WTC11 (cell line): ENCODE measurements at regions of chr16 and their contacts with region 1.

Region 1: DNA sequence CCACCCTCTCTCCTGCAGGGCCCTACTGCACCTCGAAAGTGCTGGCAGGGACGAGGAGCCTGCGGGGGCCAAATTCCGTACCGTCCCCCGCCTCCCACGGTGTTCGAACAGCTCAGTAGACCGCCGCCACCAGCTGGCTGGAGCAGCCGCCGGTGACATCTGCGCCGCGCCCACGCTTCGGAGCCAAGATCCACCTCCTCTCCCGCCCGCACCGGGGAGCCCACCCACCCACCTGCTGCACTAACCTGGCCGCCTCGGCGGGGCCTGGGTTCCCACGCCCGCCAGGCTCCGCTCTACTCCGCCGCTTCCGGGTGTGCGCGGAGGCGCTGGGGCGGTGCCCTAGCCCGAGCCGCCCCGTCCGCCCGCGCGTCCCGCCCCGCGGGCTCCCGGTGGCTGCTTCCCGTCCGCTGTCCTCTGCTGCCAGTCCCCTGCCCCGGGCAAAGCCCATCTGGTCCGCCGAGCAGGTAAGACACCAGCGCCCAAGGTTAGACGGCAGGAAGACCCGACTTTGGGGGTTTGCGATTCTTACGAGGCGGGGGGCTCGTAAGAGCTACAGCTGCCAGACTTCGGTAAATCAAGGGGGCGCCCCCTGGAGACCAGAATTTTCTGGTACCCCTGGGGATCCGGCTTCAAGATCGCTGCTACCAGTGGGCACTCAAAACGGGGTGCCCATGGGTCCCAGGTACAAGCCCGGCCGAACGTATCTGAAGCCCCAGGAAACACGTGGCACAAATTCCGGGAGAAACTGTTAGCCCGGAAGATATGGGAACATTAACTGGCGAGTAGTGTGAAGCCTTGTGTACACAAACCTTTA is at the starts of genes FBXL8 and TRADD:
- DNase-seq: peak; percentile 67
- ATAC-seq: 0 out of 2 replicates have a peak, but pooled peaks have one; percentile 2
- H3K4me3 Mint-ChIP-seq: peak within 1 kb of the TSS; percentile 74
- H3K27ac Mint-ChIP-seq: no peak within 1 kb of the TSS
- H3K4me1 Mint-ChIP-seq: peaks cover 28% of the 10 kb centered on the region
- H3K27me3 Mint-ChIP-seq: peaks cover 99% of the 10 kb centered on the region
- CTCF ChIP-seq: 0 out of 2 replicates have a peak, but pooled peaks have one; percentile 28
- total RNA-seq, gene FBXL8: 1.1 to 1.2 TPM (median 1.1 TPM) in 3 replicates
- total RNA-seq, gene TRADD: 1.4 to 2.1 TPM (median 1.7 TPM) in 3 replicates

Region 2: GRCh38 chr16:66911112-66911511 is 248.7 kb before region 1 on chr16:
- CTCF ChIA-PET with region 1: interaction called, 10 read pairs
- POLR2A ChIA-PET with region 1: no interaction called
- DNase-seq: no peak
- ATAC-seq: no peak
- H3K4me3 Mint-ChIP-seq: no peak overlapping the region
- H3K27ac Mint-ChIP-seq: no peak overlapping the region
- H3K4me1 Mint-ChIP-seq: no peaks in the 10 kb centered on the region
- H3K27me3 Mint-ChIP-seq: peaks cover 13% of the 10 kb centered on the region
- CTCF ChIP-seq: no peak

Region 3: GRCh38 chr16:66961065-66961744 is 198.6 kb before region 1 on chr16 and contains the start of gene CES3:
- CTCF ChIA-PET with region 1: interaction called, 51 read pairs
- POLR2A ChIA-PET with region 1: no interaction called
- DNase-seq: peak; percentile 91
- ATAC-seq: peak; percentile 100
- H3K4me3 Mint-ChIP-seq: peak within 1 kb of the TSS; percentile 66
- H3K27ac Mint-ChIP-seq: peak within 1 kb of the TSS; percentile 56
- H3K4me1 Mint-ChIP-seq: peaks cover 9% of the 10 kb centered on the region
- H3K27me3 Mint-ChIP-seq: peaks cover 8% of the 10 kb centered on the region; the same call in 1 of the 2 replicates
- CTCF ChIP-seq: peak; percentile 72
- total RNA-seq, gene CES3: 3.3 to 6.0 TPM (median 5.7 TPM) in 3 replicates

Region 4: GRCh38 chr16:66991545-66992077 is 168.2 kb before region 1 on chr16:
- CTCF ChIA-PET with region 1: interaction called, 14 read pairs
- POLR2A ChIA-PET with region 1: no interaction called
- DNase-seq: no peak
- ATAC-seq: no peak
- H3K4me3 Mint-ChIP-seq: no peak overlapping the region
- H3K27ac Mint-ChIP-seq: no peak overlapping the region
- H3K4me1 Mint-ChIP-seq: no peaks in the 10 kb centered on the region
- H3K27me3 Mint-ChIP-seq: peaks cover 17% of the 10 kb centered on the region
- CTCF ChIP-seq: no peak

Region 5: DNA sequence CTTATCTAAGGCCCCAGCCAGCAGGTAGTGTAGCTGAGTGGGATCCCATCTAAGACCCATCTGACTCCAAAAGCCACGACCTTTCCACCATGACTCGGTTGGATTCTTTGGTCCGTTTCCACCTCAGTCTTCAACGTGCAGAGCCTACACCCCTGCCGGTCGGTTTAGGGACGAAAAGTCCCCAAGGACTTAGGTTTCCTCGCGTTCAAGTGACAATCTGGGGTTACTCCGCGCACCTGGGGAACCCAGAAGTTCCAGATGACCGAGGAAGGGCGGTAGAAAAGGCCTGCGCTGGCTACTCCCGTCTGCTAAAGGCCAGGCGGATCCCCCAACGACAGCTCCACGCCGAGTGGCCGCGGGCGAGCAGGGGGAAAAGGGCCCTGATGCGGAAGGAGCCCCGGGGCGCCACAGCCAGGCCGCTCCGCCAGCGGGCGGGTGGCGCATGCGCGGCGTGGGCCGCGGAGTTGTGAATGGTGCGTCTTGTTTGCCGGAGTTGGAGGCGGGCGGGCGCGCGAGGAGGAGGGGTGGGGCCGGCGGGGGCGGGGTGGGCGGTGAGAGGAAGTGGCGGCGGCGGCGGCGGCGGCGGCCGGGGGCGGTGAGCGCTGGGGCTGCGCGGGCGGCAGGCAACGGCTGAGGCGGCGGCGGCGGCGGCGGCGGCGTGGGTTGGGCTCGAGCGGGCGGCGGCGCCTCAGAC is 131.1 kb before region 1 on chr16 and contains the start of gene CBFB:
- CTCF ChIA-PET with region 1: interaction called, 26 read pairs
- POLR2A ChIA-PET with region 1: no interaction called
- DNase-seq: peak; percentile 78
- ATAC-seq: peak; percentile 83
- H3K4me3 Mint-ChIP-seq: peak within 1 kb of the TSS; percentile 84
- H3K27ac Mint-ChIP-seq: no peak within 1 kb of the TSS
- H3K4me1 Mint-ChIP-seq: peaks cover 16% of the 10 kb centered on the region; the same call in 1 of the 2 replicates
- H3K27me3 Mint-ChIP-seq: peaks cover 10% of the 10 kb centered on the region
- CTCF ChIP-seq: no peak
- total RNA-seq, gene CBFB: 36.9 to 40.9 TPM (median 37.1 TPM) in 3 replicates

Region 6: DNA sequence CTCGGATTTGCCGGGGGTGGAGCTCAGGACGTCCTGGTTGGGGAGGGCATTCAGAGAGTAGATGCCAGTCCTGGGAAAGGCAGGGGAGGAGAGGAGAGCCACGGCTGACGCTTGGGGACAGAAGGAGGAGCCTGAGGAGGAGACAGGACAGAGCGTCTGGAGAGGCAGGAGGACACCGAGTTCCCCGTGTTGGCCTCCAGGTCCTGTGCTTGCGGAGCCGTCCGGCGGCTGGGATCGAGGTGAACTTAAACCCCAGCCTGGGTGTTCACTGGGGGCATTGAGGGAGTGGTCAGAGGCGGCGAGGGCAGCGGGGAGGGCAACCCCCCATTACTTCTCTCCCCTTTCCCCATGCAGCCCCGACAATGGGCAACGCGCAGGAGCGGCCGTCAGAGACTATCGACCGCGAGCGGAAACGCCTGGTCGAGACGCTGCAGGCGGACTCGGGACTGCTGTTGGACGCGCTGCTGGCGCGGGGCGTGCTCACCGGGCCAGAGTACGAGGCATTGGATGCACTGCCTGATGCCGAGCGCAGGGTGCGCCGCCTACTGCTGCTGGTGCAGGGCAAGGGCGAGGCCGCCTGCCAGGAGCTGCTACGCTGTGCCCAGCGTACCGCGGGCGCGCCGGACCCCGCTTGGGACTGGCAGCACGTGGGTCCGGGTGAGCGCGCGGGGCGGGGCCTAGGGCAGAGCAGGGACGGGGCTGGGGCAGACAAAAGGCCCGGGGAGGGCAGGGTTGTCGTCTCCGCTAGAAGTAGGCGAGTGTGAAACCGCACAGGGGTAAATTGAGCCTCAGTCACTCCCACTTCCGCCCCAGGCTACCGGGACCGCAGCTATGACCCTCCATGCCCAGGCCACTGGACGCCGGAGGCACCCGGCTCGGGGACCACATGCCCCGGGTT is 14.3 kb after region 1 on chr16:
- CTCF ChIA-PET with region 1: interaction called, 386 read pairs
- POLR2A ChIA-PET with region 1: interaction called, 9 read pairs
- DNase-seq: peak; percentile 76
- ATAC-seq: peak; percentile 19
- H3K4me3 Mint-ChIP-seq: peak overlapping the region; percentile 84
- H3K27ac Mint-ChIP-seq: no peak overlapping the region; the same call in 1 of the 2 replicates
- H3K4me1 Mint-ChIP-seq: peaks cover 36% of the 10 kb centered on the region
- H3K27me3 Mint-ChIP-seq: peaks cover 89% of the 10 kb centered on the region
- CTCF ChIP-seq: no peak

Region 7: GRCh38 chr16:67236563-67237395 is 77.0 kb after region 1 on chr16:
- CTCF ChIA-PET with region 1: interaction called, 10 read pairs
- POLR2A ChIA-PET with region 1: no interaction called
- DNase-seq: peak; percentile 96
- ATAC-seq: peak; percentile 93
- H3K4me3 Mint-ChIP-seq: peak overlapping the region; percentile 43; the same call in 1 of the 2 replicates
- H3K27ac Mint-ChIP-seq: peak overlapping the region; percentile 80
- H3K4me1 Mint-ChIP-seq: peaks cover 17% of the 10 kb centered on the region
- H3K27me3 Mint-ChIP-seq: no peaks in the 10 kb centered on the region
- CTCF ChIP-seq: no peak